Caco-2 (cell line): ENCODE measurements at regions of chr1 and their contacts with region 1.

Region 1: GRCh38 chr1:27161594-27161993 is 6.7 kb upstream of the SLC9A1 start:
- DNase-seq: no peak
- H3K4me3 ChIP-seq: no peak overlapping the region
- H3K4me3 Mint-ChIP-seq: no peak overlapping the region
- H3K27ac Mint-ChIP-seq: no peak overlapping the region
- H3K4me1 ChIP-seq: no peaks in the 10 kb centered on the region
- H3K4me1 Mint-ChIP-seq: peaks cover 5% of the 10 kb centered on the region
- H3K27me3 ChIP-seq: no peaks in the 10 kb centered on the region
- H3K27me3 Mint-ChIP-seq: no peaks in the 10 kb centered on the region
- CTCF ChIP-seq: no peak

Region 2: GRCh38 chr1:27203946-27204345 is 42.4 kb after region 1 on chr1:
- CTCF ChIA-PET with region 1: no interaction called
- POLR2A ChIA-PET with region 1: no interaction called
- intact Hi-C with region 1: loop called (anchors 2 kb)
- DNase-seq: no peak
- H3K4me3 ChIP-seq: no peak overlapping the region
- H3K4me3 Mint-ChIP-seq: no peak overlapping the region
- H3K27ac Mint-ChIP-seq: no peak overlapping the region
- H3K4me1 ChIP-seq: no peaks in the 10 kb centered on the region
- H3K4me1 Mint-ChIP-seq: no peaks in the 10 kb centered on the region
- H3K27me3 ChIP-seq: no peaks in the 10 kb centered on the region
- H3K27me3 Mint-ChIP-seq: no peaks in the 10 kb centered on the region
- CTCF ChIP-seq: no peak

Region 3: GRCh38 chr1:27300341-27301051 is 138.9 kb after region 1 on chr1:
- CTCF ChIA-PET with region 1: no interaction called
- POLR2A ChIA-PET with region 1: no interaction called
- intact Hi-C with region 1: no loop called
- DNase-seq: peak; percentile 56 to 74
- H3K4me3 ChIP-seq: no peak overlapping the region
- H3K4me3 Mint-ChIP-seq: no peak overlapping the region
- H3K27ac Mint-ChIP-seq: no peak overlapping the region
- H3K4me1 ChIP-seq: peaks cover 11% of the 10 kb centered on the region
- H3K4me1 Mint-ChIP-seq: peaks cover 7% of the 10 kb centered on the region
- H3K27me3 ChIP-seq: no peaks in the 10 kb centered on the region
- H3K27me3 Mint-ChIP-seq: no peaks in the 10 kb centered on the region
- CTCF ChIP-seq: peak; percentile 91 to 94